ENCODE measurements at regions of chr15 and their contacts with region 1.

Region 1: GRCh38 chr15:57133127-57133968 is 214.9 kb downstream of the TCF12 start:
- DNase-seq: no peak
- ATAC-seq: no peak

Region 2: GRCh38 chr15:56919609-56920366 is 213.6 kb before region 1 on chr15:
- intact Hi-C with region 1: loop called in 1 of 2 experiments (anchors 5 kb)
- DNase-seq: peak; percentile 26 to 45
- ATAC-seq: peak; percentile 3

Region 3: DNA sequence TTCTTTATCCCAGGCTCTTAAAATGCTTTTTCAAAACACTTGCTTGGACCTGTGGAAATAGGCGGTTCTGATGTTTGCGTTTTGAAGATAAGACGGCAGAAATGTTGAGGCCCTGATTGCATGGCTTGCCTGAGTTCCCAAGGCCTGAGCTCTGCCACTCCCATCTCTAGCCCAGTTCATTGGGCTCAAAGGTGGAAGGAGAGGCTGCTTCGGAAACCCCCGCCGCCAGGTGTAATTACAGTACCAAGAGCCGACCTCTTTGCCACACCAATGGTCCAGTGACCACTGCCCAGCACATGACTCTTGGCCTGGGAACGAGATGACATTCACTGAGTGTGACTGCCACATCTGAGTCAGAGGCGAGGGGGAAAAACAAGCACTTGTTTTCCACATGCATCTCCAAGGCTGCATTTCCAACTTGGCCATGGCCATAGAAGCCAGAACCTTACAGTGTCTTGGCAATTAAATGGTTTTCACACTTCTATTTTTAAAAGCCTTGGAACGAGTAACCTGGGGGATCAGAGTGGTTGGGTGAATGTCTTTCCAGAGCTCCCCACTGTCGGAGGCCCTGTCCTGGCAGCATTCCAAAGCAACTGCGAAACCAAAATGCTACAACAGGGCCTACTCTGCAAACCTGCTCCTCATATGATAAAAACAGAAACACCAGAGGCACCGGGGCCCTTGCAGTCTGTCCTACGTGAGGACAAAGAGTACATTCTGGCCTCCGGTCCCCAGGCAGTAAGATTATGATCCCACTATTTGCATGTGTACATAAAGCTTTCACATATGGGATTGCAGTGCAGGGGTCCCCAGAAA is 179.2 kb after region 1 on chr15:
- intact Hi-C with region 1: no loop called
- DNase-seq: peak; percentile 78 to 90
- ATAC-seq: peak; percentile 93